Naive thymus-derived CD4-positive, alpha-beta T cell (primary cell): ENCODE measurements at regions of chr9 and their contacts with region 1.

Region 1: DNA sequence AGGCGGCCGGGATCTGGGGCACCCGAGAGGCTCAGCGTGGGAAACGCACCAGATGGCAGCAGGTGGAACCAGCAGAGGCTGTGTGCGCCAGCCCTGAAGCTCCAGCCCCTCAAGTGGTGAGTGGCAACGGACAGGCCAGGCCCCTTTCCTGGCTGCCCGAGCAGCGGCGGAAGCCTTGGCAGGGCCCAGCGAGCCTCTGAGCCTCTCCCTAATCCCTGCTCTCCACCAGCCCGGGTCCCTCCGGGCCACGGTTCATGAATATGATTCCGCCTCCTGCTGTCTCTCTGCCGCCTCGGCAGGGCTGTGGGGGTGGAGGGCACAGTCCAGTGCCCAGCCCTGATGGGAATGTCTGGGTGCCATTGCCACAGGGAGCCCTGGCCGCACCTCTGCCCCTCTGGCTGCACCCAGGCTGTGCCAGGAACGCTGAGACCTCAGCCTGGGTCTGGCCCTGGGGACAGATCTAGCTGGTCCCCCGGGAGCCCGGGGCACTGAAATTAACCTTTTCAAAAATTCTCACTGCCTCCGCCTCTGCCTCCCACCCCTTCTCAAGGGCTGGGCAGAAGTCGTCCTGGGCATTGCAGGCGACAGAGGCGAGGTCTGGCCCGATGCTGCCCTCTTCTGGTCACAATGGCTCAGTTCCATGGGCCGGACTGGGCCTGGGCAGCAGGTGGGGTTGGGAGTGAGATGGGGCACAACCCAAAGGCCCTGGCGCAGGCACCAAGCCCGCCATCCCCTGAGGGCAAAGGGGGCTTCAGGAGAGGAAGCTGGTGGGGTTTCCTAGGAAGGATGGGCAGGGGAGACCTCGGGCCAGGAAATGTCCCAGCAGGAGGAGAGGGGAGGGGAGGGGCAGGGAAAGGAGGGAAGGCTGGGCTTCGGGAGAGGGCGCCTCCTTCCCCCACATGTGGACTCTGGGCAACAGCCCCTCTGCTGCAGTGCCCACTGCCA is 20.3 kb downstream of the CCDC187 start:
- DNase-seq: peak; percentile 22 to 77 (median 59)
- ATAC-seq: peak; percentile 91
- H3K4me3 ChIP-seq: no peak overlapping the region
- H3K4me3 Mint-ChIP-seq: peak overlapping the region in 4 of 10 donors; percentile 14 to 40 (median 22)
- H3K27ac ChIP-seq: no peak overlapping the region
- H3K27ac Mint-ChIP-seq: no peak overlapping the region
- H3K4me1 ChIP-seq: no peaks in the 10 kb centered on the region
- H3K4me1 Mint-ChIP-seq: peaks cover 0 to 7% (median 0%) of the 10 kb centered on the region in 7 donors
- H3K27me3 ChIP-seq: no peaks in the 10 kb centered on the region
- H3K27me3 Mint-ChIP-seq: peaks cover 0 to 12% (median 0%) of the 10 kb centered on the region in 5 donors

Region 2: DNA sequence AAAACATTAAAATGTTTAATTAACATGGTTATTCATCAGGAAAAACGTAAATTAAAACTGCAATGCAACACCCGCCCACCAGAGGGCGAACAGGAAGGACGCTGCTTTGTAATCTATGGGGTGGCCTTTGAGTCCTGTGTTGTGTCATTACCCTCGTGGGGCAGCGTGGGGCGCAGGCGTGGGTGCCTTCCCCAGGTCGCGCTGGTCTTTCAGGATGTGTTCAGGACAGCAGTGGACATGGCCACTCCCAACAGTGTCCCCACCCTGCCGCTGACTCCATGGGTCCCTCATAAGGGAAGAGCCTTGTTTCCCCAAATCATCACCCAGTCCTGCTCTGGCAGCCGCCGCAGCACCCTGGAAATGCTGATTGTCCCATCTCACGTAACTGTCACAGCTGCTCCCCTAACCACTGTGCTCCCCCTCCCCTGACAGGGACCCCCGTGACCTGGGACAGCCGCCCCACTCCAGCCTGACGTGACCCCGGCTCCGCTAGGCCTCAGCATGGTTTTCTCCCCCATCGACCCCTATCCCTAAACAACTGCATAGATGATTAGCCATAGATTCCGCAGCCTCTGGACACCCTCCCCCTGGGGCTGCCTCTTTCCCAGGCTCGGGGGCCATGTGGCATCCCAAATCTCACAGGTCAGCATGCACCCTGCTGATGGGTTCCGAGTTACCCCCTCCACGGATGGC is 680.6 kb before region 1 on chr9:
- CTCF ChIA-PET with region 1: no interaction called
- POLR2A ChIA-PET with region 1: no interaction called
- intact Hi-C with region 1: loop called in 1 of 2 experiments (anchors 5 kb)
- DNase-seq: peak in 7 of 9 donors; percentile 31 to 56 (median 37)
- ATAC-seq: peak; percentile 61
- H3K4me3 ChIP-seq: no peak overlapping the region
- H3K4me3 Mint-ChIP-seq: no peak overlapping the region
- H3K27ac ChIP-seq: no peak overlapping the region
- H3K27ac Mint-ChIP-seq: no peak overlapping the region
- H3K4me1 ChIP-seq: no peaks in the 10 kb centered on the region
- H3K4me1 Mint-ChIP-seq: peaks cover 0 to 3% (median 0%) of the 10 kb centered on the region in 7 donors
- H3K27me3 ChIP-seq: no peaks in the 10 kb centered on the region
- H3K27me3 Mint-ChIP-seq: peaks cover 7 to 26% (median 8%) of the 10 kb centered on the region in 5 donors

Region 3: DNA sequence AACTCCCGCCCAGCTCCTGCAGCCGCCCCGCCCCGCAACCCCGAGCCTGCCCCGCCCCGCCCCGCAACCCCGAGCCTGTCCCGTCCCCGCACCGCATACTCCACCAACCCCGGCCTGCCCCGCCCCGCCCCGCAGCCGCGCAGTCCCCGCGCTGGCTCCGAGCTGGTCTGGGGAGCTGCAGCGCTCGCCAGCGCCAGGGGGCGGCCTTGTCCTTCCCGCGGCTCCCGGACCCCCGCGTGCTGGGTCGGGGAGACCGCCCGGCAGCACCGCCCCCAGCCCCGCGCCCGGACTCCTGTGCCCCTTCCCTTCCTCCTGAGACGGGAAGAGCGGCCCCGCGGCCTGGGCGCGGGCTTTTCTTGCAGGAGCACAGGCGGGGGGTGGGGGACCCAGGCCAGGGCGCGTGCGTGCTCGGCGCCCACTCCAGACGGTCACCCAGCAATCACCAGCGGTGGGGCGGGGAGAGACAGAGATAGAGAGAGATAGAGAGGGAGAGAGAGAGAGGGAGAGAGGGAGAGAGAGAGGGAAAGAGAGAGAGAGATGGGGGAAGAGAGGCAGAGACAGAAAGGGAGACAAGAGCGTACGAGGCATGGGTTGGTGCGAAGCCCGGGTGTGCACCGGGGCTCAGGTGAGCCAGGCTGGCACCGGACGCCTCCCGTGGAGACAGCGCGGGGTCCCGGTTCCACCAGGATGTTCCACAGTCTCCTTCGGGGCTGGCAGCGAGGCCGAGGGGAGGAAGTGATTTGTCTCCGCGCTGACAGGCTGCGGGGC is 150.2 kb before region 1 on chr9:
- CTCF ChIA-PET with region 1: no interaction called
- POLR2A ChIA-PET with region 1: no interaction called
- intact Hi-C with region 1: loop called in 1 of 2 experiments (anchors 1 kb)
- DNase-seq: no peak
- ATAC-seq: peak; percentile 69
- H3K4me3 ChIP-seq: no peak overlapping the region
- H3K4me3 Mint-ChIP-seq: peak overlapping the region in 8 of 10 donors; percentile 19 to 82 (median 70)
- H3K27ac ChIP-seq: no peak overlapping the region
- H3K27ac Mint-ChIP-seq: no peak overlapping the region
- H3K4me1 ChIP-seq: peaks cover 0 to 3% of the 10 kb centered on the region in 2 donors
- H3K4me1 Mint-ChIP-seq: peaks cover 0 to 11% (median 6%) of the 10 kb centered on the region in 7 donors
- H3K27me3 ChIP-seq: peaks cover 0 to 3% of the 10 kb centered on the region in 2 donors
- H3K27me3 Mint-ChIP-seq: peaks cover 14 to 48% (median 35%) of the 10 kb centered on the region in 5 donors

Region 4: DNA sequence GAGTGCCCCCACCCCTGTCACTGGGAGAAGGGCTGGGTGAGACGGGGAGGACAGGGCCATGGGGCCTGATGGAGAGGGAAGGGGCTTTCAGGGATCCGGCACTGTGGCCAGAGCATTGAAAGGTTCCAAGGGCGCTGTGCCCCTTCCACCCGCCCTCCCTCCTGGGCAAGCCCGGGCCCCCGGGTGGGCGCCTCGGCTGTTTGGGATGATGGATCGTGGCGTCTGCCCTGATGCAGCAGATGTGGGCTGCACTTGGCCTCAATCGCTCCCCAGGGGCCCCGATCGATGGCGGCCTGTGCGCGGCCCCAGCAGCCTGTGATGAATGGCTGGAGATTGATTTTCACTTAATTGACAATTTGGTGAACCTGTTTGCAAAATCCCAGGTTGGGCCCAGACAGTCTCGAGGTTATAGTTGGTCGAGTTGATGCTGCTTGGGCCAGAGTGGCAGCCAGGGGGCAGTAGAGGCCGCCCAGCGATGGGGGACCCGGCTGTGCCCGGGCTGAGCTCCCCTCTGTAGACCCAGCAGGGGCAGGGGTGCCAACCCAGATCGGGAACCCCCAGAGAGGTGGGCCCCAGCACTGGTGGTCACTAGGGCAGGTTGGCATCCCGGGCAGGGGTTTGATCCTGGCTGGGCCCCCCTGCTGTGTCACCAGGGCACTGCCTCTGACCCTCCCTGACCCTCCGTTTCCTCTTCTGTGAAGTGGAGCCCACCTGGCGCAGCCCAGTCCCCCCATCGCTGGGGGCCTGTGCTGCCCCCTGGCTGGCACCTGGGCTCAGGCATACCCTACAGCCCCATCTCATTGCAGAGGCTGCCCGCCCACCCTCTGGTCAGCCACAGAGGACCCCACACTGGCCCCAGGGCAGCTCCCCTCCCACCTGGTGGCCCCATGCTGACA is 113.3 kb before region 1 on chr9:
- CTCF ChIA-PET with region 1: interaction called, 3 read pairs
- POLR2A ChIA-PET with region 1: no interaction called
- intact Hi-C with region 1: loop called in 1 of 2 experiments (anchors 1 kb)
- DNase-seq: peak in 8 of 9 donors; percentile 16 to 65 (median 27)
- ATAC-seq: peak; percentile 66
- H3K4me3 ChIP-seq: no peak overlapping the region
- H3K4me3 Mint-ChIP-seq: no peak overlapping the region
- H3K27ac ChIP-seq: no peak overlapping the region
- H3K27ac Mint-ChIP-seq: no peak overlapping the region
- H3K4me1 ChIP-seq: no peaks in the 10 kb centered on the region
- H3K4me1 Mint-ChIP-seq: no peaks in the 10 kb centered on the region
- H3K27me3 ChIP-seq: no peaks in the 10 kb centered on the region
- H3K27me3 Mint-ChIP-seq: peaks cover 0 to 14% (median 9%) of the 10 kb centered on the region in 5 donors

Region 5: DNA sequence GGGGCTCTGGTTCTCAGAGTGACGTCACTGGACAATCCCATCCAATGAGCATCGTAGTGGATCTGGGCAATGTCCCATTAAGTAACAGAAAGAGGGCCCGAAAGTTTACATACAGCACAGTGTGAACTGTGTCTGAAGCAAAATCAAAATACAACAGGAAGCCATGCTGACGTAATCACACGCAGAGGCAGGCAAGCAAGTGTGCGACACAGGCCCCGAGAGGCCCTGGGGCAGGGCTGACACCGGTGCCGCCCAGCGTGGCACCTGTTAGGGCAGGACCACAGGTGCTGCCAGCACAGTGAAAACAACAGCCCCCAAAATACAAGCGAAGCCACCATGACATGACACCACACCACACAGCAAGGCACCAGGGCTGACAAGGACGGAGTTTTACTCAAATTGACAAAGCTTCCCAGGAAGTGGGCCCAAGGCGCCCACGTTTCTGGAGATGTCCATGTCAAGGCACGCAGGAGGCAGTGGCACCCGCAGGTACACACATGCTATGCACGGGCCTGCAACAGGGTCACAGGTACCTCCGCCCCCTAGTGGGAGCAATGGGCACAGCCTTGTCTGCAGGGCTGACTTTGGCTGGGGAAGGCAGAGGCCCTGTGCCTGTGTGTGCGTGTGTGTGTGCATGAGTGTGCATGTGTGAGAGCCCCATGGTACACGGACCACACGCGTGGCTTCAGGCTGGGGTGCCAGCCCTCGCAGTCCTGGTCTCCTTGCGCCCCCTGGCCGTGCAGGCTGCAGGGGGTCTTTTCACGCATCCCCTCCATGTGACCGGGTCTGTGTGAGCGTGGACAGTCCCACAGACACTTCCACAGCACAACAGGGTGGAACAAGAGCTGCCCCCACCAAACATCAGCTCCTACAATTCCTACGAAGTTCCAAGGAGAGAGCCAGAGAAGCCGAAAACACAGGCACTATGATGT is 57.5 kb before region 1 on chr9:
- CTCF ChIA-PET with region 1: no interaction called
- POLR2A ChIA-PET with region 1: no interaction called
- intact Hi-C with region 1: loop called in 1 of 2 experiments (anchors 1 kb)
- DNase-seq: peak in 8 of 9 donors; percentile 40 to 60 (median 53)
- ATAC-seq: peak; percentile 85
- H3K4me3 ChIP-seq: no peak overlapping the region
- H3K4me3 Mint-ChIP-seq: no peak overlapping the region
- H3K27ac ChIP-seq: no peak overlapping the region
- H3K27ac Mint-ChIP-seq: peak overlapping the region in 1 of 9 donors; percentile 59
- H3K4me1 ChIP-seq: no peaks in the 10 kb centered on the region
- H3K4me1 Mint-ChIP-seq: peaks cover 5 to 30% (median 19%) of the 10 kb centered on the region in 7 donors
- H3K27me3 ChIP-seq: no peaks in the 10 kb centered on the region
- H3K27me3 Mint-ChIP-seq: no peaks in the 10 kb centered on the region